Activated B cell treated with CpG ODN at 0.5 μM for 24 hours (primary cell): ENCODE measurements at regions of chr13 and their contacts with region 1.

Region 1: DNA sequence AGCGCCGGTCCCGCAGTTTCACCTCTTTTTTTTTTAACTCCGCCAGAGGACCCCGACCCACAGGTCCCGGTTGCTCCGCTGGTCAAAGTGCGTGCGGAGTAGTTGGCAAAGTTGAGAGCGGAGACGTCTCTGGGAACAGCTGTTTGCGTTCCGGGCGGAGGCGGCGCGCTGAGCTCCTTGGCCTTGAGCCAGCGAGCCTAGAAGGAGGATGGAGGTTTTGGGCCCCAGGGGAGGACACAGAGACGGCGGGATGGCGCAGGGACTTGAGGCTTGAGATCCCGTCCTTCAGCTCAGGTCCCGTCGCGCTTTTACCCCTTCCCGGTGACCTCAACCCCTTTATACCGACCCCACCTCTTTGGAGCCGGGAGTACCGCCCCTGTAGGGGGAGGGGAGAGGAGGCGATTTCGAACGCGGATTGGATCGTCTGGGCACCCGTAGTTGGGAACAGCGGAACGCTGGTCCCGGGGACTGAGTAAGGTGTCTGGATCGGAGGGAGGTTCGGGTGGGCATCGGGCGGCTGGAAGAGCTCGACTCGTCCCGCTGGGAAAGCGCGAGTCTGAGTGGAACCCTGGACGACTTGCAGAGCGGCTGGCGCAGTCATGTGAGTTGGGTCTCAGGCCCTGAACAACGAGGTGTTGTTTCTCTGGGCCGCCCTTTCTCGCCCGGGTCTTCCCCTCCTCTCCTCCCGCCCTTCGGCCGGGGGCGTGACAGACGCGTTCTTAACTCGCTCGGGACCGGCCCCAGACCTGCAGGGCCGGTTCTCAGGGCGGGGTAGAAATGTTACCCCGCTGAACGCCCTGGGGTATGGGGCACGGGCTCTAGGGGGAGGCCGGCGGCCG is at the start of gene WBP4:
- DNase-seq: peak; percentile 91
- ATAC-seq: peak; percentile 75
- H3K4me3 Mint-ChIP-seq: peak within 1 kb of the TSS; percentile 100
- H3K27ac Mint-ChIP-seq: peak within 1 kb of the TSS; percentile 100
- H3K4me1 Mint-ChIP-seq: peaks cover 39% of the 10 kb centered on the region
- H3K27me3 Mint-ChIP-seq: peaks cover 2% of the 10 kb centered on the region
- CTCF ChIP-seq: no peak
- total RNA-seq, gene WBP4: 8.6 and 9.0 TPM in 2 replicates

Region 2: DNA sequence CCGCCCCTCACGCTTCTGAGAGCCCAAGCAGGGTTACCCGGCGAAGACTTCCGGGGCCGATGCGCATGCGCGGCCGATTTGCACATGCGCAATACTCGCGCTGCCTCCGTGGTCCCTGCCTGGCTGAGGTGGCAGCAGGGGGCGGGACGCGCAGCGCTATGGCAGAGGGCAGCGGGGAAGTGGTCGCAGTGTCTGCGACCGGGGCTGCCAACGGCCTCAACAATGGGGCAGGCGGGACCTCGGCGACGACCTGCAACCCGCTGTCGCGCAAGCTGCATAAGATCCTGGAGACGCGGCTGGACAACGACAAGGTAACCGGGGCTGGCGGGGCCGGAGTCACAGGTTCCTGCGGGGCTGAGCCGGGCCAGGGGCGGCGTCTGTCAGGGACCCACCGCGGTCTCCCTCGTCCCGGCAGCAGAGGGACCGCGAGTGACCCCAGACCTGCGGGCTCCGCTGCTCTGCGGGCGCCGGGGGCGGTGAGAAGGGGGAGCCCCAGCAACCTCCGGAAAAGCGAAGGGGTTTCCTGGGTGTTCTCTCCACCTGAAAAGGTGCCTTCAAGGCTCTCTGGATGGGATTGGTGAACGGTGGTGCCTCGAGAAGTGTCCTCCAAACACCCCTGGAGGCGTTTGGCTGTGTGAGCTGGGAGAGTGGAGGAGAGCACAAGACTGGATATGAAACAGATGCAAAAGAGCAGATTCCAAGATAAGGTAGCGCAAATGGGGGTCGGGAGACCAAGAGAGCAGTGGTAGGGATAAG is 1405.5 kb before region 1 on chr13 and contains the start of gene COG6:
- CTCF ChIA-PET with region 1: no interaction called
- POLR2A ChIA-PET with region 1: no interaction called
- intact Hi-C with region 1: loop called (anchors 5 kb)
- DNase-seq: peak; percentile 99
- ATAC-seq: peak; percentile 91
- H3K4me3 Mint-ChIP-seq: peak within 1 kb of the TSS; percentile 91
- H3K27ac Mint-ChIP-seq: peak within 1 kb of the TSS; percentile 85
- H3K4me1 Mint-ChIP-seq: peaks cover 26% of the 10 kb centered on the region
- H3K27me3 Mint-ChIP-seq: peaks cover 2% of the 10 kb centered on the region
- CTCF ChIP-seq: no peak
- total RNA-seq, gene COG6: 28.9 and 29.6 TPM in 2 replicates

Region 3: DNA sequence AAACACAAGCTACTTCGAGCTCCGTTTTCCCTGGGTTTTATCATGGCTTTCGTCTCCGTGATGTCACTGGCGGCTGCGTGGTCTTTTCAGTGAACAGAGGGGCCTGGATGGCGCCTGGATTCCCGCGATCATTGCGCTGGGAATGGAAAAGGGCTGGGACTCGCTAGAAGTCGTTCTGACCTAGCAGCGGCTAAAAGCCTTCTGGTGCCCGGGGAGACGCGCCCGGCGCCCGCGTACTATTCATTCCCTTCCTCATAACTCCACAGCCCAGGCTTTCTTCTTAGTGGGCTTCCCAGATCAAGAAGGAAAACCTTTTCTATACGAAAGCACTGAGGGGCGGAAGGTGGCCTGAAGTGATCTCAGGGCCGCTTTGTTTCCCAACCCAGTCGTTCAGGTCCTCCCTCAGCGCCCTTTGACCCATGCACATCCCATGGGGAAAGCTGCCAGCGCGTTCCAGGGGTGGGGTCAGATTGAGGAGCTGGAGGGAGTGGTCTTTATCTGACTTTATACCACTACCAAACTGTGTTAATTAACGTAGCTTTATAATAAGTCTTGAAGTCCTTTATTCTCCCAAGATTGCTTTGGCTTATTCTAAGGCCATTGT is 138.8 kb before region 1 on chr13:
- CTCF ChIA-PET with region 1: interaction called, 8 read pairs
- POLR2A ChIA-PET with region 1: interaction called, 26 read pairs
- intact Hi-C with region 1: loop called (anchors 1 kb)
- DNase-seq: no peak
- ATAC-seq: no peak
- H3K4me3 Mint-ChIP-seq: peak overlapping the region; percentile 66
- H3K27ac Mint-ChIP-seq: peak overlapping the region; percentile 69
- H3K4me1 Mint-ChIP-seq: peaks cover 24% of the 10 kb centered on the region
- H3K27me3 Mint-ChIP-seq: no peaks in the 10 kb centered on the region
- CTCF ChIP-seq: no peak

Region 4: GRCh38 chr13:41004875-41005693 is 56.2 kb before region 1 on chr13:
- CTCF ChIA-PET with region 1: interaction called, 6 read pairs
- POLR2A ChIA-PET with region 1: interaction called, 10 read pairs
- intact Hi-C with region 1: no loop called
- DNase-seq: no peak
- ATAC-seq: peak; percentile 81
- H3K4me3 Mint-ChIP-seq: peak overlapping the region; percentile 12
- H3K27ac Mint-ChIP-seq: peak overlapping the region; percentile 71
- H3K4me1 Mint-ChIP-seq: peaks cover 75% of the 10 kb centered on the region
- H3K27me3 Mint-ChIP-seq: no peaks in the 10 kb centered on the region
- CTCF ChIP-seq: no peak

Region 5: DNA sequence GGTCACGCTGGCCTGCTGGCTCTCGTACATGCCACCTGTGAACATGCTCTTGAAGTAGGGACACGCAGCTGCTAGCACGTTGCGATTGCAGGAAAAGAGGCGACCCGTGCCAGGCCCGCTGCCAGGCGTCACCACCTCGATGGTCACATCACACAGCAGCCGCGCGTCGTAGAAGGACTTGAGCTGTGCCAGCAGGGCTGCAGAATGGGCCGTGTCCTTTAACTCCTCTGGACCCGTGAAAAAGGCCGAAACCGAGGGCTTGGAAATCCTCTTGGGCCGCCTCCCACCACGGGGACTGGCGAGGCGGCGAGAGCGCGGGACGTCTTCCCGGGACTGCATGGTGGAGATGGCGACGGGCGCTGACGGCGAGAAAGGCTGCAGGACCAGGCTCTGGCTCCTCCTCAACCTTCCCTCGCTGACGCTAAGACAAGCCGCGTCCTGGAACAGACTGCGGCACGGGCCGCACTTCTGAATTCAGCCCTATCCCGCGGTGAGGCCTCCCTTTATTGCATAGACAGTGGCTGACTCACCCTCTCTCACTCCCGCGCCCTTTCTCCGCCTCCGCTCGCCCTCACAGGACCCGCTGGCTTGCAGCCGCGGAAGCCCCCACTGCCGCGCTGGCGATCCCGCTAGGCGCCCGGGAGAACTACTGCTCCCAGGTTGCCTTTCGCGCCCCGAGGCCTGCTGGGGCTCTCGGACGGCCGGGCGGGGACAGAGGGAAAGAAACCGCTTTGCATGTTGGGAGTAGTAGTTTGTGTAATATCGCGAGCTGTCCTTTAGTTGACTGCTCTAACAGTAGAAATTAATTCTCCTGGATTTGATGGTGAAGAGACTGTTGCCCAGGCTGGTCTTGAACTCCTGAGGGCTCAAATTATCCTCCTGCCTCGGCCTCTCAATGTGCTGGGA is 132.9 kb after region 1 on chr13 and contains the start of gene KBTBD7:
- CTCF ChIA-PET with region 1: interaction called, 3 read pairs
- POLR2A ChIA-PET with region 1: interaction called, 7 read pairs
- intact Hi-C with region 1: loop called (anchors 1 kb)
- DNase-seq: peak; percentile 85
- ATAC-seq: peak; percentile 92
- H3K4me3 Mint-ChIP-seq: peak within 1 kb of the TSS; percentile 93
- H3K27ac Mint-ChIP-seq: peak within 1 kb of the TSS; percentile 94
- H3K4me1 Mint-ChIP-seq: peaks cover 54% of the 10 kb centered on the region
- H3K27me3 Mint-ChIP-seq: no peaks in the 10 kb centered on the region
- CTCF ChIP-seq: no peak
- total RNA-seq, gene KBTBD7: 5.2 and 6.4 TPM in 2 replicates

Region 6: DNA sequence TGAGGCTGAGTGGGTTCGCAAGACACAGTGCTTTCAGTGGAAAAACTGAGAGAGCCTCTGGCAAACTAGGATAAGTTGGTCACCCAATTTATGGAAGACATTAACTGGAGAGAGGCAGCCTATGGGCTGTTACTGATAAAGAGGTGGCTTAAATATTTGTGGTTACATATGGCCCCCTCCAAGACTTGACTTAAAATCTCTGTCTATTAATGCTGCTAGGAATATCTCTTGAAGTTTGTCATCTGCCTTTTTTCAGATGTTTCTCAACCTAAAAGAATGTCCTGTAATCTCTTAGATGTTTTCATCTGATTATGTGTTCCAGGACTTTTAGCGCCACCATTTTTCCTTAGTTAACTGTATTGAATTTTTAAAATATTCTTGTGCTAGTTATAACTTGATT is 304.3 kb after region 1 on chr13:
- CTCF ChIA-PET with region 1: no interaction called
- POLR2A ChIA-PET with region 1: no interaction called
- intact Hi-C with region 1: no loop called
- DNase-seq: no peak
- ATAC-seq: no peak
- H3K4me3 Mint-ChIP-seq: no peak overlapping the region
- H3K27ac Mint-ChIP-seq: no peak overlapping the region
- H3K4me1 Mint-ChIP-seq: no peaks in the 10 kb centered on the region
- H3K27me3 Mint-ChIP-seq: no peaks in the 10 kb centered on the region
- CTCF ChIP-seq: no peak

Region 7: GRCh38 chr13:42048682-42049453 is 987.6 kb after region 1 on chr13:
- CTCF ChIA-PET with region 1: no interaction called
- POLR2A ChIA-PET with region 1: no interaction called
- intact Hi-C with region 1: loop called (anchors 5 kb)
- DNase-seq: peak; percentile 50
- ATAC-seq: peak; percentile 76
- H3K4me3 Mint-ChIP-seq: peak overlapping the region; percentile 85
- H3K27ac Mint-ChIP-seq: no peak overlapping the region
- H3K4me1 Mint-ChIP-seq: peaks cover 12% of the 10 kb centered on the region
- H3K27me3 Mint-ChIP-seq: peaks cover 34% of the 10 kb centered on the region
- CTCF ChIP-seq: no peak